HEK293 (cell line): ENCODE measurements at regions of chr15 and their contacts with region 1.

Region 1: GRCh38 chr15:101294731-101295606 is at the start of gene SNRPA1:
- H3K4me3 ChIP-seq: peak within 1 kb of the TSS; percentile 64
- H3K27ac ChIP-seq: peak within 1 kb of the TSS; percentile 95
- H3K4me1 ChIP-seq: peaks cover 11% of the 10 kb centered on the region
- CTCF ChIP-seq: no peak; the same call in 1 of the 2 replicates

Region 2: DNA sequence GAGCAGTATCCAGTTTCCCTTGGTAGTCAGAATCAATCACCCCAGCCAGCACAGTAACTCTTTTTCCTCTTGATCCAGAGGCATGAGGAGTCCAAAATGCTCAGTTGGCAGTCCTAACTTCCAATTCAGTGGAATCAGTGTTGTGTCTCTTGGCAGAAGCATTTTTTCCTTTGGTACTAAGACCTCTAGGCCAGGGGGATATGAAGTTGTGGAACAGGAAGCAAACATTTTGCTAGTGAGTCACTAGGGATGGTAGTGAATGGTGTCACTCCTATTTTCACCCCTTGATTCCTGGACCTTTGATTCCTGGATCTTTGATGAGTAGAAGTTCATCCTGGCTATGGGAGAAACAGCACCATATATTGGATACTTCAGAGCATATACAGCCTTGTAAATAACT is 485.8 kb before region 1 on chr15:
- CTCF ChIA-PET with region 1: no interaction called
- POLR2A ChIA-PET with region 1: no interaction called
- H3K4me3 ChIP-seq: no peak overlapping the region
- H3K27ac ChIP-seq: no peak overlapping the region
- H3K4me1 ChIP-seq: no peaks in the 10 kb centered on the region
- CTCF ChIP-seq: no peak

Region 3: GRCh38 chr15:100821327-100821726 is 473.6 kb before region 1 on chr15:
- CTCF ChIA-PET with region 1: no interaction called
- POLR2A ChIA-PET with region 1: no interaction called
- H3K4me3 ChIP-seq: no peak overlapping the region
- H3K27ac ChIP-seq: no peak overlapping the region
- H3K4me1 ChIP-seq: no peaks in the 10 kb centered on the region
- CTCF ChIP-seq: no peak

Region 4: GRCh38 chr15:101283931-101284330 is 11.0 kb before region 1 on chr15:
- CTCF ChIA-PET with region 1: interaction called, 28 read pairs
- POLR2A ChIA-PET with region 1: interaction called, 10 read pairs
- H3K4me3 ChIP-seq: no peak overlapping the region
- H3K27ac ChIP-seq: no peak overlapping the region
- H3K4me1 ChIP-seq: no peaks in the 10 kb centered on the region
- CTCF ChIP-seq: no peak

Region 5: GRCh38 chr15:101314336-101315125 is 19.6 kb after region 1 on chr15:
- CTCF ChIA-PET with region 1: interaction called, 15 read pairs
- POLR2A ChIA-PET with region 1: no interaction called
- H3K4me3 ChIP-seq: no peak overlapping the region
- H3K27ac ChIP-seq: no peak overlapping the region
- H3K4me1 ChIP-seq: no peaks in the 10 kb centered on the region
- CTCF ChIP-seq: no peak

Region 6: DNA sequence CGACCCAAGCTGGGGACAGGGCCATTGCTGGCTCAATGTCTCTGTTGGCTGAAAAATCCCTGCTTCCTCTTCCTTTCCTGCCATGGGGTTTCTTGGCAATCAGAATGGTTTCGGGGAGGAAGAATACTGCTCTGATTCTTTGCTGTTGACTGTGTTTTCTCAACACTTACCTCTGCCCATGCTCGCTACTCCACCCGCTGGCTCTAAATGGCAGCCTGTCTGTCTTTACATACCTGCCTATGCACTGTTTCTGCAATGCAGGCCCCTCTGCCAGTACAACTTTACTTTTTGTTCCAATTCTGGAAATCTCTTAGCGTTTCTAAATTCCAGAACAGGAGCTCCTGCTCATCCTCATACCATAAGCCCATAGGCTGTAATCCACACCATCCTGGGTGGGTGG is 38.4 kb after region 1 on chr15:
- CTCF ChIA-PET with region 1: no interaction called
- POLR2A ChIA-PET with region 1: no interaction called
- H3K4me3 ChIP-seq: no peak overlapping the region
- H3K27ac ChIP-seq: no peak overlapping the region
- H3K4me1 ChIP-seq: no peaks in the 10 kb centered on the region
- CTCF ChIP-seq: no peak